Mammary epithelial cell (primary cell): ENCODE measurements at regions of chr1 and their contacts with region 1.

Region 1: DNA sequence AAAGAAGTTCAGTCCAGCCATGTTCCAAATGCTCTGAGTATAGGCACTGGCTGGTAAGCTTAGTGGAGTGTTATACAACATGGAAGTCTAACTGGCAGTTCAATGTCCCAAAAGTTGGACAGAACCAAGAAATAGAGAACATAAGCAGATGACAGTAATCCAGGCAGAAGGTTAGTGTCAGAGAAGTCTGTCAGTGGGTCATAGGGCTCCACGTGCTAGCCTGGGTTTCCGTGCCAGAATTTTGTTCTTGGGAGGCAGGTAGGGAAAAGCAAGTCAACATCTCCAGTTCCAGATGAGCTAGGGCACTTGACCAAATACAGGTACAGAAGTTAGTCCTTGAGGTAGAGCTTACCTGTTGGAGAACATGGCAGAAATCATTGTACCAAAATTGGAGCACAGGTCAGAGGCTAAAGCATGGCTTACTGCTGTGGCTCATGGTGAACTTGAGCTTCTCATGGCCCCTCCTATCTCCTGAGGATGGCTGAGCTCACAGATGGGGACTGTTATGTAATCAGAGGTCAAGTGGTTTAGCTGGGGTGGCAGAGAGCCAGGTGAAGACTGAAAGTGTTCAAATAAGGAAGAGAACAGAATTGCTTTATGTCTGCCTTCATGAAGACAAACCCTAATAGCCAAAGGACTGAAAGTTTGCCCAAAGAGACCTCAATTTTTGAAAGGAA is 170.8 kb downstream of the NFIA start:
- DNase-seq: peak; percentile 70
- H3K4me3 ChIP-seq: no peak overlapping the region
- H3K27ac ChIP-seq: peak overlapping the region; percentile 63
- H3K4me1 ChIP-seq: peaks cover 30% of the 10 kb centered on the region
- H3K27me3 ChIP-seq: no peaks in the 10 kb centered on the region
- CTCF ChIP-seq: no peak

Region 2: GRCh38 chr1:61157468-61157987 is 95.7 kb before region 1 on chr1:
- CTCF ChIA-PET with region 1: no interaction called
- dilution Hi-C with region 1: no loop called
- in situ Hi-C with region 1: loop called in 1 of 2 experiments (anchors 25 kb)
- intact Hi-C with region 1: no loop called
- DNase-seq: peak; percentile 56
- H3K4me3 ChIP-seq: no peak overlapping the region
- H3K27ac ChIP-seq: no peak overlapping the region
- H3K4me1 ChIP-seq: peaks cover 9% of the 10 kb centered on the region
- H3K27me3 ChIP-seq: no peaks in the 10 kb centered on the region
- CTCF ChIP-seq: no peak